BJ (cell line): ENCODE measurements at regions of chr16 and their contacts with region 1.

Region 1: GRCh38 chr16:11639925-11640899 is 28.0 kb upstream of the SNN start:
- DNase-seq: peak; percentile 99
- H3K4me3 ChIP-seq: no peak overlapping the region
- H3K27me3 ChIP-seq: no peaks in the 10 kb centered on the region
- CTCF ChIP-seq: no peak

Region 2: GRCh38 chr16:11396241-11397048 is 243.8 kb before region 1 on chr16:
- CTCF ChIA-PET with region 1: interaction called, 13 read pairs
- POLR2A ChIA-PET with region 1: no interaction called
- DNase-seq: no peak
- H3K4me3 ChIP-seq: no peak overlapping the region
- H3K27me3 ChIP-seq: 0 out of 2 replicates have a peak, but pooled peaks cover 2% of the 10 kb centered on the region
- CTCF ChIP-seq: peak; percentile 99

Region 3: DNA sequence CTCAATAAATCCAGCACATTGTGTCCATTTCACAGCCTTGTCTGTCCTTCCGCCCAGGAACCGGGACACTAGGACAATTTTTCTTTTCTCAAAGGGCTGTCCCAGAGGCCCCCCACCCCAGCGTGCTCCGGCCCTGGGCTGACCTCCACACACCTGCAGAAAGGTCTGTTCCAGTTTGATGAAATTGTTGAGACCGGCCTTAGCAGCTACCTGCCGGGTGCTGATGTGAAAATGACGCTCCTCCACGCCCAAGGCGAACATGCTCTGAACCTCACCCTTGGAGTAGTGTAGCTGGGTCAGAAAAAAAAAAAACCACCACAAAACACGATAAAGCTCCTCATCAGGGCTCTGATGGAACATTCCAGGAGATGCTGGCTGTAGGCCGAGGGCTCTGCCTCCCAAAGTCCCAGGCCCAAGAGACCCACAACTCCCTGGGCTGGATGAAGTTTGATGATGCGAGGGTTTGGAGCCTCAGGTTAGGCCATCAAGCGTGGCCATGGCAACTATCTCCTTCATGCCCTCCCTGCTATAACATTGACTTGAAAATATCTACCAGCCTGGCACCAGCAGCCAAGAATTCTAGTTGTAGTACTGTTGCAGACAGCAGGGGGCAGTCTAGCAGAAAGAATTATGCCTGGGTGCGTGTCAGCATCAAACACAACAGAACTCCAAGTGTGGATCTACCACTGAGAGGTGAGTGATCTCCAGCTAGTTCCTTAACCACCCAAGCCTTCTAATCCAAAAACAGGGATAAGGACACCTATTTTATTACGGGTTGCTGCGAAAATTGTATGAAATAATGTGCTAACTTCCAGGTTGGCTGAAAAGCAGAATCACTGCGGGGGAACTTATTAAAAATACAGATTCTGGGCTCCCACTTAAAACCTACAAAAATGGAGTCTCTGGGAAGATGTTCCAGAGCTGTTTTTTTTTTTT is 232.9 kb before region 1 on chr16:
- CTCF ChIA-PET with region 1: interaction called, 62 read pairs
- POLR2A ChIA-PET with region 1: no interaction called
- DNase-seq: peak; percentile 7
- H3K4me3 ChIP-seq: no peak overlapping the region
- H3K27me3 ChIP-seq: 0 out of 2 replicates have a peak, but pooled peaks cover 1% of the 10 kb centered on the region
- CTCF ChIP-seq: peak; percentile 66

Region 4: GRCh38 chr16:11535471-11535870 is 104.7 kb before region 1 on chr16:
- CTCF ChIA-PET with region 1: interaction called, 62 read pairs
- POLR2A ChIA-PET with region 1: no interaction called
- DNase-seq: no peak
- H3K4me3 ChIP-seq: no peak overlapping the region
- H3K27me3 ChIP-seq: no peaks in the 10 kb centered on the region
- CTCF ChIP-seq: no peak

Region 5: GRCh38 chr16:11586856-11587642 is 53.2 kb before region 1 on chr16 and contains the start of gene LITAF:
- CTCF ChIA-PET with region 1: interaction called, 10 read pairs
- POLR2A ChIA-PET with region 1: no interaction called
- DNase-seq: no peak
- H3K4me3 ChIP-seq: peak within 1 kb of the TSS; percentile 84
- H3K27me3 ChIP-seq: no peaks in the 10 kb centered on the region
- CTCF ChIP-seq: no peak; the same call in 1 of the 2 replicates
- polyA plus RNA-seq, gene LITAF: 118 and 212 TPM in 2 replicates

Region 6: GRCh38 chr16:11629963-11630767 is 10.0 kb before region 1 on chr16:
- CTCF ChIA-PET with region 1: interaction called, 11 read pairs
- POLR2A ChIA-PET with region 1: interaction called, 3 read pairs
- DNase-seq: no peak
- H3K4me3 ChIP-seq: no peak overlapping the region
- H3K27me3 ChIP-seq: no peaks in the 10 kb centered on the region
- CTCF ChIP-seq: no peak

Region 7: DNA sequence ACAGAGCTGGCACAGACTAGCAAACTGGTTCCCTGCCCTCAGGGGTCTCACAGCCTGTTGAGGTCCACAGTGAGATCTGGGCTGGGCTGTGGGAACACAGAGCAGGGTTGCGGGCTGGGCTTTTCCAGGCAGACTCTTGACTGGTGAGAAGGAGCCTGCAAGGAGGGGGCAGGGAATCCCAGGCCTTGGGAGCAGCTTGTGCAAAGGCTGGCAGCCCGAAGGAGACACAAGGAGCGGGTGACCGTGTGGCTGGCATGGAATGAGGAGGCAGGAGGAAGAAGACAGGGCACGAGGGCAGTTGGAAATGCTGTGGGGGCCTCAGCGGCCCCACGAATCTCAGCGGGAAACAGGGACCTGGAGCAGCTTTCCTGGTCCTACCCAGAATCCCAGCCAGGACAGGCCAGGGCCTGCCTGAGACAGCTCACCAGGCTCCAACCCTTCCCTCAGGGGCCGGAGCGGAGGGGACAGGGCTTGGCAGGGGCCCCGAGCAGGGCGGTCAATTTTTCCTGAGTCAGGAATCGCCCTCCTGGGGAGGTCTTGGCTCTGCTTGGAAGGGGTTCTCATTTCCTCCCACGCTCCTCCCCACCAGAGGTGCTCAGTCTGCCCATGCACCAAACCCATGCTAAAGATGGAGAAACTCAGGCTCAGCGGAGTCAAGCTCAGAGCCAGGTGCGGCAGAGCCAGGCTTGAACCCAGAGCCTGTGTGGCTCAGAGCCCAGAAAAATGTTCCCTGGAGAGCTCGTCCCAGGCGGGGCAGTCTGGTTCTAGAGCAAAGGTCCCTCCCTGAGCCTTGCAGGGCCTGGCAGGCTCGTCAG is 18.9 kb after region 1 on chr16:
- CTCF ChIA-PET with region 1: interaction called, 12 read pairs
- POLR2A ChIA-PET with region 1: interaction called, 7 read pairs
- DNase-seq: no peak
- H3K4me3 ChIP-seq: no peak overlapping the region
- H3K27me3 ChIP-seq: no peaks in the 10 kb centered on the region; the same call in 1 of the 2 replicates
- CTCF ChIP-seq: no peak